BJ (cell line): ENCODE measurements at regions of chr17 and their contacts with region 1.

Region 1: GRCh38 chr17:66165513-66166123 is 26.3 kb downstream of the CEP112 start:
- DNase-seq: peak; percentile 10
- H3K4me3 ChIP-seq: no peak overlapping the region
- H3K27me3 ChIP-seq: no peaks in the 10 kb centered on the region
- CTCF ChIP-seq: peak; percentile 62

Region 2: DNA sequence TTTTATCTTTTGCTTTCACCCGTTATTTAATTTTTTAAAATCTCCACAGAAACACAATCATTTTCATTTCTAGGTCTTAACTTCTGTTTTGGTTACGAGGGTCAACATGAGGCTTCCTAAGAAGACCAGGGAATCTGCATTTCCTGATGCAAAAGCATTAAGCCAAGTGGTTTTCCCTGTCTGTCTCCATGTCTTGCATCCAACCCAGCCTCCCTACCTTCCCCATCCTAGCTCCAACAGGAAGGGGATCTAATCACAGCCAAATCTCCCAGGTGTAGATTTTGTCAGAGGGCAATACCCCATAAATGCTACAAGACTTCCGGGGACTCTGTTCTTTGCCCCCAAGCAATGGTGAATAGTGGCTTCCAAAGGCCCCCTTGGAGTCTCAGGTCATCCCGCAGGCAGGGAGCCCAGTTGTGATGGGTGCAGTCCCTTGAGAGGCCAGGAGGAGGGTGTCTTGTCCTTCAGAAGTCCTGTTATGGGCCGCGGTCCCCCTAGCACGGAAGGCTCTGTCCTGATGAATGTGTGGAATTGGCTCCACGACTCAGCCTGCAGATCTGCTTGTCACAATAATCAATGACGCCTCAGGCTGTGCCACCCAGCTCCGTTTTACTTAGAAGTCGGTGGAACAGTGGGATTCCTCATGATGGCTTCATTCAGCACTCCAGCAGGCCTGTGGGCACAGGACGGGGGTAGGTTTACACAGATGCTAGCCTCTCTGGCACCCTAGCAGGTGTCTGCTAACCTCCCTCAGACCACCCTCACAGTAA is 887.4 kb before region 1 on chr17:
- CTCF ChIA-PET with region 1: interaction called, 17 read pairs
- POLR2A ChIA-PET with region 1: no interaction called
- DNase-seq: no peak
- H3K4me3 ChIP-seq: no peak overlapping the region
- H3K27me3 ChIP-seq: peaks cover 1% of the 10 kb centered on the region; the same call in 1 of the 2 replicates
- CTCF ChIP-seq: peak; percentile 84